Right cardiac atrium (tissue), 5 donors: ENCODE measurements at regions of chr3 and their contacts with region 1.

Region 1: DNA sequence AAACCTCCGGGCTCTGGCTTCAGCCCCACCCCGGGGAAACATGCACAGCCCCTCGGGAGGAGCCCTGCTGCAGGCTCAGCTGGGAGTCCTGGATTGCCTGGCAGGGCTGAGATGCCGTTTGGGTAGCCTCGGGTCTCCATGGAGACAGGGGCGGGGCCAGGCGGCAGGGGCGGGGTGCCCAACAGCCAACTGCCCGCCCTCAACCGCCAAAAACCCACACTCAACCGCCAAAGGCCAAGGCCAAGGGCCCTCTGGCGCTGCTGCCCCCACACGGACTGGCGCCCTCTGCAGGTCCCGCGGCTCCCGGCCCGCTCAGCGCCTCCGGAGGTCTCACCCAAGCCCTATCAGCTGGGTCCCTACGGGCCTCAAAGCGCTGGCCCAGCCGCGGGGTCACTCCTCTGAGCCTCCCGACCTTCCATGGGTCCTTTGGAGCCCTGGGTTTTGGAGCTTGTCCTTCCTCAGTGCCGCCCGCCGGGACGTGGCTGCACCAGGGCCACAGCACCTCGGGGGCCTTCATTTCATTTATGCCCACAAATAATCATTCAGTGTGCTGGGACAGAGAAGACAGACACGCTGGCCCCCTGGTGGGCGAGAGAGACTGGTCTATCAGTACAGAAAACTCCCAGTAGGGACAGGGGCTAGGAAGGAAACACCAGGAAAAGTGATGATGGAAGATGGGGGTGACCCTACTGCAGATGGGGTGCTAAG is 33.5 kb upstream of the ACAD9 start:
- DNase-seq: peak; percentile 91 to 97 (median 96)
- ATAC-seq: peak; percentile 92 to 95
- H3K4me3 ChIP-seq: peak overlapping the region; percentile 51
- H3K27ac ChIP-seq: peak overlapping the region; percentile 69
- H3K4me1 ChIP-seq: peaks cover 3% of the 10 kb centered on the region
- H3K27me3 ChIP-seq: no peaks in the 10 kb centered on the region

Region 2: DNA sequence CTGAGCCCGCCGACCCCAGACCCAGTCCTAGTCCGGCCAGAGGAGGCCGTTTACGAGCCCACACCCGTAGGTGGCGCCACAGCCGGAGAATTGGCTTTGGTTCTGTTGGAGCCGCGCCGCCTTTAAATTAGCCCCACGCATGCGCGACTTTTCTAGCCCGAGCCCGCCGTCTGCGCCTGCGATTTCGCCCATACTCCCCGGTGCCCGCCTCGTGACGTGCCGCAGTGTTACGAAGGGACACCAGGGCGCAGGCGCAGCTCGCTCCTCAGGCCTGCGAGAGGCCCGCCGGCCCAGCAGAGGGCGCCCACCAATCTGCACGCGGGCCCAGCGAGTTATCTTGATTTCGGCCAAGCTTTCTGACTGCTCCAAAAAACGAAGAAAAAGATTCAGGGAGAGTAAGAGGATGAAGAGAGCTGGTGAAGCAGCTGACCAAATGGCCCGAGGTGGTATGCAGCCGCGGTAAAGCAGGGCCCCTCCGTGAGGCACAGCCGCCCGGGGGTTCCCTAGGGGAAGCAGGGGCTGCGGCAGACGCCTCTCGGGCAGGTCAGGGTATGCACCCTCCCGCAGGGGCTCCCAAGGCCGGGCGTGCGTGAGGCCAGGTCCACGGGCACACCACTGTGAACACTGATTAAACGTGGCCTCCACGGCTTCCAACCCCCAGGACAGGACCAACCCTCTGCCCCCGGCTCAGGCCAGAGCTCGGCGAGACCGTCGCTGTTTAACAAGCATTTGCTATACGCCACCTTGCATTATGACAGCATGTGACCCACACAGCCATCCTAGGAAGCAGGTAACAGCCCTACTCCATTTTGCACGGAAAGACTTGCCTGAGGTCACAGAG is 228.2 kb before region 1 on chr3:
- intact Hi-C with region 1: loop called in 1 of 4 experiments (anchors 10 kb)
- DNase-seq: peak; percentile 98 to 100 (median 99)
- ATAC-seq: peak; percentile 95 to 96
- H3K4me3 ChIP-seq: peak overlapping the region; percentile 75
- H3K27ac ChIP-seq: peak overlapping the region; percentile 78
- H3K4me1 ChIP-seq: no peaks in the 10 kb centered on the region
- H3K27me3 ChIP-seq: no peaks in the 10 kb centered on the region

Region 3: GRCh38 chr3:128680602-128681368 is 165.1 kb before region 1 on chr3:
- intact Hi-C with region 1: loop called in 1 of 4 experiments (anchors 10 kb)
- DNase-seq: peak; percentile 100
- ATAC-seq: peak; percentile 99 to 100
- H3K4me3 ChIP-seq: peak overlapping the region; percentile 66
- H3K27ac ChIP-seq: peak overlapping the region; percentile 98
- H3K4me1 ChIP-seq: no peaks in the 10 kb centered on the region
- H3K27me3 ChIP-seq: no peaks in the 10 kb centered on the region

Region 4: GRCh38 chr3:128794770-128795649 is 50.9 kb before region 1 on chr3:
- intact Hi-C with region 1: loop called in 2 of 4 experiments (anchors 10 kb)
- DNase-seq: peak; percentile 33 to 72 (median 55)
- ATAC-seq: peak; percentile 91 to 92
- H3K4me3 ChIP-seq: no peak overlapping the region
- H3K27ac ChIP-seq: no peak overlapping the region
- H3K4me1 ChIP-seq: peaks cover 10% of the 10 kb centered on the region
- H3K27me3 ChIP-seq: no peaks in the 10 kb centered on the region

Region 5: DNA sequence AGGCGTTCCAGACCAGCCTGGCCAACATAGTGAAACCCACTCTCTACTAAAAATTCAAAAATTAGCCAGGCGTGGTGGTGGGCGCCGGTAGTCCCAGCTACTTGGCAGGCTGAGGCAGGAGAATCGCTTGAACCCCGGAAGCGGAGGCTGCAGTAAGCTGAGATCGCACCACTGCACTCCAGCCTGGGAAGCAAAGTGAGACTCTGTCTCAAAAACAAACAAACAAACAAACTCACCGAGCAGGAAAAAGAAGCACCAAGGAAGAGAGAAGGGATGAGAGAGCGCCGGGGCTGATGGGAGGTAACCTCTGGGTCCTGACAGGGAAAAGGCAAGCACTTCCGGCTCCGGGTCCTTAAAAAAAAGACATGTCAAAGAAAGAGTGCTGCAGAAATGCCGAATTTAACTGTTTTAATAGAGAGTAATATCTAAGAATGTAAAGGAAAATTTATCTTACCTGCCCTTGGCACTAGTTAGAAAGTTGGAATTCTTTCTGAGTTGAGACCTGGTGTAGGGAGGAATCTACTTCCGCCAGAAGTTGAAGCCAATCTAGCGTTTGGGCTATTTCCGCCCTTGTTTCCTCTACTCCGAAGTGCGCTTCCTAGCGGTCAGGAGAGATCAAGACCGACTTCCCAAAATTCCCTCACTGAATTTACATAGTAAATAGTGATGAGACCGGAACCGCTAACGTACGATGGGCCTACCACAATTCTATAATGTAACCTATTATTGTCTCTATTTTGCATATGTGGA is 553.4 kb after region 1 on chr3:
- intact Hi-C with region 1: no loop called
- DNase-seq: peak; percentile 77 to 87 (median 80)
- ATAC-seq: peak; percentile 86 to 88
- H3K4me3 ChIP-seq: peak overlapping the region; percentile 75
- H3K27ac ChIP-seq: peak overlapping the region; percentile 76
- H3K4me1 ChIP-seq: no peaks in the 10 kb centered on the region
- H3K27me3 ChIP-seq: no peaks in the 10 kb centered on the region